ENCODE measurements at regions of chr9 and their contacts with region 1.

Region 1: DNA sequence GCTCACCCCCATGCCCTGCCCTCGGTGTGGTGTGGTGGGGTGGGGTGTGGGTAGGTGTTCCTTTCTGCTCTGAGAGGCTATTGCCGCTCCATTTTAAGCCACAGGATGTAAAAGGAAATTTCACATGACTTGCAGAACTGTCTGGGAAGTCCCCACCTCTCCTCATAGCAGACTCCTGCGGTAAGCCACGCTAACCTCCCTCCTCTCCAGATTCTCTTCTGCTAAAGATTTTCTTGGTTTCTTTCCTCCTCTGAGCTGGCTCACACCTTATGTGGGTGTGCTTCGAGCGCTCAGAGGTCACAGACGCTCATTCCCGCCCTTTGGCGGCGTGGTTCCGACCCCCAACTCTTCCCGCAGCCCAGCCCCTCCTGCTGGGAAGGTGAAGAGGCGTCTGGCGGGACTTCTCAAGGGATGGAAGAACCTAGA is 32.9 kb upstream of the CDK20 start:
- DNase-seq: no peak
- H3K4me3 ChIP-seq: no peak overlapping the region
- CTCF ChIP-seq: no peak
- POLR2A ChIP-seq: no peak

Region 2: GRCh38 chr9:87909310-87910041 is 97.7 kb before region 1 on chr9:
- intact Hi-C with region 1: no loop called
- DNase-seq: peak in 1 of 2 donors; percentile 59
- H3K4me3 ChIP-seq: no peak overlapping the region
- CTCF ChIP-seq: no peak
- POLR2A ChIP-seq: no peak

Region 3: GRCh38 chr9:89265214-89265613 is 1258.0 kb after region 1 on chr9:
- intact Hi-C with region 1: loop called (anchors 5 kb)
- DNase-seq: no peak
- H3K4me3 ChIP-seq: no peak overlapping the region
- CTCF ChIP-seq: no peak
- POLR2A ChIP-seq: no peak

Region 4: DNA sequence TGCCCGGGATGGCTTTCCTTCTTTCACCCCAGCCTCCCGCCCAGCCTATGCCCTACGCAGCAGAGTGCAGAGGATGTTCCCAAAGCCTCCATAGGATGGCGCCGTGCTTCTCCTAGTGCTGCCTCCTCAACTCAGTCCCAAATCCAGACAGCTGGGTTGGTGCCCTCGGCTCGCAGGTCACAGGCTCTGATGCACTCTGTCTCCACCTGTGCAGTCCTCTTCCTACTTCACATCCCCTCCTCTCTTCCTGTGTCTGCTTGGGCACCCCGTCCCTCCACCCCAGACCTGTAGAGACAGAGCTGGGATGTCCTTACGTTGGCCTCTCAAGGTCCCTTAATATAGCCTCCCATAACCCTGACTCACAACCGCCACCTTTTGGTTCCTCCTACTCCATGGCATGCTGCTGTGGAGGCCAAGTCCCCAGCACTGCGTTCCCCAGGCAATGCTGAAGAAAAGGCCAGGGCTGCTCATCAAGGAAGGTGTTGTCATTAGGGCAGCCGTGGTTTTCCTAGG is 1912.0 kb after region 1 on chr9:
- intact Hi-C with region 1: no loop called
- DNase-seq: peak in 1 of 2 donors; percentile 69
- H3K4me3 ChIP-seq: no peak overlapping the region
- CTCF ChIP-seq: no peak
- POLR2A ChIP-seq: no peak

Measured in lower leg skin (tissue), 4 donors.